Transverse colon (tissue), 4 donors: ENCODE measurements at regions of chr19 and their contacts with region 1.

Region 1: GRCh38 chr19:40529093-40529954 is 47.3 kb upstream of the SHKBP1 start:
- DNase-seq: peak; percentile 88
- H3K4me3 ChIP-seq: peak overlapping the region; percentile 0 to 63 (median 42)
- H3K27ac ChIP-seq: peak overlapping the region in 3 of 4 donors; percentile 42 to 49 (median 47)
- H3K4me1 ChIP-seq: peaks cover 6 to 11% (median 9%) of the 10 kb centered on the region in 4 donors
- H3K27me3 ChIP-seq: peaks cover 14% of the 10 kb centered on the region
- CTCF ChIP-seq: peak; percentile 95 to 98 (median 97)
- EP300 ChIP-seq: no peak
- POLR2A ChIP-seq: no peak

Region 2: GRCh38 chr19:40570313-40571004 is 41.1 kb after region 1 on chr19:
- in situ Hi-C with region 1: no loop called
- intact Hi-C with region 1: no loop called
- DNase-seq: peak; percentile 100
- H3K4me3 ChIP-seq: peak overlapping the region in 2 of 4 donors; percentile 34 to 42
- H3K27ac ChIP-seq: peak overlapping the region; percentile 14 to 43 (median 23)
- H3K4me1 ChIP-seq: peaks cover 7 to 18% (median 12%) of the 10 kb centered on the region in 4 donors
- H3K27me3 ChIP-seq: peaks cover 37% of the 10 kb centered on the region
- CTCF ChIP-seq: peak in 4 of 5 experiments; percentile 32 to 65 (median 38)
- EP300 ChIP-seq: no peak
- POLR2A ChIP-seq: no peak

Region 3: GRCh38 chr19:40598121-40598917 is 69.0 kb after region 1 on chr19:
- in situ Hi-C with region 1: loop called in 2 of 4 experiments (anchors 10 kb)
- intact Hi-C with region 1: loop called (anchors 2 kb)
- DNase-seq: peak; percentile 92
- H3K4me3 ChIP-seq: peak overlapping the region in 1 of 4 donors; percentile 5
- H3K27ac ChIP-seq: peak overlapping the region in 2 of 4 donors; percentile 84 to 96
- H3K4me1 ChIP-seq: peaks cover 31 to 66% (median 53%) of the 10 kb centered on the region in 4 donors
- H3K27me3 ChIP-seq: peaks cover 59% of the 10 kb centered on the region
- CTCF ChIP-seq: peak; percentile 95 to 99 (median 98)
- EP300 ChIP-seq: no peak
- POLR2A ChIP-seq: no peak

Region 4: GRCh38 chr19:40633207-40633606 is 103.9 kb after region 1 on chr19:
- in situ Hi-C with region 1: no loop called
- intact Hi-C with region 1: loop called (anchors 10 kb)
- DNase-seq: no peak
- H3K4me3 ChIP-seq: no peak overlapping the region
- H3K27ac ChIP-seq: no peak overlapping the region
- H3K4me1 ChIP-seq: peaks cover 0 to 9% (median 4%) of the 10 kb centered on the region in 4 donors
- H3K27me3 ChIP-seq: peaks cover 5% of the 10 kb centered on the region
- CTCF ChIP-seq: no peak
- EP300 ChIP-seq: no peak
- POLR2A ChIP-seq: no peak